Caco-2 (cell line): ENCODE measurements at regions of chr9 and their contacts with region 1.

Region 1: GRCh38 chr9:136784249-136784996 is 6.7 kb upstream of the TMEM141 start:
- DNase-seq: peak in 1 of 2 experiments; percentile 62
- H3K4me3 ChIP-seq: no peak overlapping the region
- H3K4me3 Mint-ChIP-seq: peak overlapping the region; percentile 15
- H3K27ac Mint-ChIP-seq: peak overlapping the region; percentile 25
- H3K4me1 ChIP-seq: peaks cover 57% of the 10 kb centered on the region
- H3K4me1 Mint-ChIP-seq: peaks cover 71% of the 10 kb centered on the region
- H3K27me3 ChIP-seq: no peaks in the 10 kb centered on the region
- H3K27me3 Mint-ChIP-seq: no peaks in the 10 kb centered on the region
- CTCF ChIP-seq: peak in 1 of 2 experiments; percentile 68

Region 2: GRCh38 chr9:136679431-136679941 is 104.9 kb before region 1 on chr9:
- CTCF ChIA-PET with region 1: no interaction called
- POLR2A ChIA-PET with region 1: no interaction called
- intact Hi-C with region 1: no loop called
- DNase-seq: no peak
- H3K4me3 ChIP-seq: no peak overlapping the region
- H3K4me3 Mint-ChIP-seq: no peak overlapping the region
- H3K27ac Mint-ChIP-seq: no peak overlapping the region
- H3K4me1 ChIP-seq: peaks cover 17% of the 10 kb centered on the region
- H3K4me1 Mint-ChIP-seq: no peaks in the 10 kb centered on the region
- H3K27me3 ChIP-seq: no peaks in the 10 kb centered on the region
- H3K27me3 Mint-ChIP-seq: no peaks in the 10 kb centered on the region
- CTCF ChIP-seq: no peak

Region 3: GRCh38 chr9:136769710-136770191 is 14.7 kb before region 1 on chr9:
- CTCF ChIA-PET with region 1: interaction called, 8 read pairs
- POLR2A ChIA-PET with region 1: no interaction called
- intact Hi-C with region 1: loop called (anchors 1 kb)
- DNase-seq: no peak
- H3K4me3 ChIP-seq: no peak overlapping the region
- H3K4me3 Mint-ChIP-seq: no peak overlapping the region
- H3K27ac Mint-ChIP-seq: no peak overlapping the region
- H3K4me1 ChIP-seq: peaks cover 7% of the 10 kb centered on the region
- H3K4me1 Mint-ChIP-seq: peaks cover 7% of the 10 kb centered on the region
- H3K27me3 ChIP-seq: no peaks in the 10 kb centered on the region
- H3K27me3 Mint-ChIP-seq: no peaks in the 10 kb centered on the region
- CTCF ChIP-seq: no peak